CD4-positive, alpha-beta memory T cell (primary cell): ENCODE measurements at regions of chr9 and their contacts with region 1.

Region 1: GRCh38 chr9:129110740-129111527 is at the starts of genes CRAT and PTPA:
- DNase-seq: peak; percentile 90 to 96 (median 91)
- H3K4me3 ChIP-seq: peak within 1 kb of the TSS; percentile 90 to 93
- H3K4me3 Mint-ChIP-seq: peak within 1 kb of the TSS; percentile 92 to 99 (median 94)
- H3K27ac ChIP-seq: peak within 1 kb of the TSS; percentile 84
- H3K27ac Mint-ChIP-seq: peak within 1 kb of the TSS; percentile 83 to 97 (median 96)
- H3K4me1 ChIP-seq: peaks cover 40% of the 10 kb centered on the region
- H3K4me1 Mint-ChIP-seq: peaks cover 17 to 46% (median 29%) of the 10 kb centered on the region in 4 donors
- H3K27me3 ChIP-seq: no peaks in the 10 kb centered on the region
- H3K27me3 Mint-ChIP-seq: no peaks in the 10 kb centered on the region
- total RNA-seq, gene CRAT: 11.2 to 12.4 TPM
- total RNA-seq, gene PTPA: 49.0 to 51.3 TPM

Region 2: GRCh38 chr9:129028192-129028957 is 82.6 kb before region 1 on chr9 and contains the start of gene SH3GLB2:
- CTCF ChIA-PET with region 1: no interaction called
- POLR2A ChIA-PET with region 1: interaction called, 5 read pairs
- intact Hi-C with region 1: loop called (anchors 2 kb)
- DNase-seq: peak; percentile 84 to 93 (median 86)
- H3K4me3 ChIP-seq: peak within 1 kb of the TSS; percentile 37 to 52
- H3K4me3 Mint-ChIP-seq: peak within 1 kb of the TSS; percentile 79 to 92 (median 84)
- H3K27ac ChIP-seq: peak within 1 kb of the TSS; percentile 34
- H3K27ac Mint-ChIP-seq: peak within 1 kb of the TSS; percentile 78 to 90 (median 85)
- H3K4me1 ChIP-seq: peaks cover 20% of the 10 kb centered on the region
- H3K4me1 Mint-ChIP-seq: peaks cover 15 to 29% (median 20%) of the 10 kb centered on the region in 4 donors
- H3K27me3 ChIP-seq: no peaks in the 10 kb centered on the region
- H3K27me3 Mint-ChIP-seq: no peaks in the 10 kb centered on the region
- total RNA-seq, gene SH3GLB2: 111 to 113 TPM

Region 3: GRCh38 chr9:129036241-129036922 is 74.6 kb before region 1 on chr9 and contains the start of gene MIGA2:
- CTCF ChIA-PET with region 1: no interaction called
- POLR2A ChIA-PET with region 1: interaction called, 6 read pairs
- intact Hi-C with region 1: loop called (anchors 1 kb)
- DNase-seq: peak; percentile 92 to 95 (median 94)
- H3K4me3 ChIP-seq: peak within 1 kb of the TSS; percentile 71 to 93
- H3K4me3 Mint-ChIP-seq: peak within 1 kb of the TSS; percentile 90 to 99 (median 96)
- H3K27ac ChIP-seq: peak within 1 kb of the TSS; percentile 70
- H3K27ac Mint-ChIP-seq: peak within 1 kb of the TSS; percentile 84 to 96 (median 91)
- H3K4me1 ChIP-seq: peaks cover 24% of the 10 kb centered on the region
- H3K4me1 Mint-ChIP-seq: peaks cover 19 to 46% (median 30%) of the 10 kb centered on the region in 4 donors
- H3K27me3 ChIP-seq: no peaks in the 10 kb centered on the region
- H3K27me3 Mint-ChIP-seq: no peaks in the 10 kb centered on the region
- total RNA-seq, gene MIGA2: 80.5 to 84.2 TPM